Activated CD4-positive, alpha-beta T cell treated with anti-CD3 and anti-CD28 coated beads for 36 hours (primary cell): ENCODE measurements at regions of chr7 and their contacts with region 1.

Region 1: GRCh38 chr7:139416405-139416804 is 56.7 kb downstream of the LUC7L2 start:
- DNase-seq: no peak
- ATAC-seq: no peak
- H3K4me3 Mint-ChIP-seq: no peak overlapping the region
- H3K27ac Mint-ChIP-seq: no peak overlapping the region
- H3K4me1 Mint-ChIP-seq: no peaks in the 10 kb centered on the region
- H3K27me3 Mint-ChIP-seq: no peaks in the 10 kb centered on the region

Region 2: DNA sequence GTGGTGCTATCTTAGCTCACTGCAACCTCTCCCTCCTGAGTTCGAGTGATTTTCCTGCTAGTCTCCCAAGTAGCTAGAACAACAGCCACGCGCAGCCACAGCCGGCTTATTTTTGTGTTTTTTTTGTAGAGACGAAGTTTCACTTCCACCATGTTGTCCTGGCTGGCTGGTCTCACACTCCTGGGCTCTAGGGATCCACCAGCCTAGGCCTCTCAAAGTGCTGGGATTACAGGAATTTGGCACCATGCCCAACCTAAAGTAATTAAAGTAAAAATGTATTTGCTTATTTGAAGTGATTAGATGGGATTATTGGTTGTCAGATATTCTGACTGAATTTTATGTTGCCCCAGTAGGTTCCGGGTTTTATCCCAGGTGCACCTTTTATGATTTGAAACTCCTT is 34.0 kb before region 1 on chr7:
- CTCF ChIA-PET with region 1: interaction called, 3 read pairs
- POLR2A ChIA-PET with region 1: interaction called, 5 read pairs
- intact Hi-C with region 1: loop called in 1 of 2 experiments (anchors 5 kb)
- DNase-seq: no peak
- ATAC-seq: no peak
- H3K4me3 Mint-ChIP-seq: no peak overlapping the region
- H3K27ac Mint-ChIP-seq: no peak overlapping the region
- H3K4me1 Mint-ChIP-seq: peaks cover 3% of the 10 kb centered on the region
- H3K27me3 Mint-ChIP-seq: no peaks in the 10 kb centered on the region

Region 3: GRCh38 chr7:139393621-139394211 is 22.7 kb before region 1 on chr7:
- CTCF ChIA-PET with region 1: interaction called, 10 read pairs
- POLR2A ChIA-PET with region 1: interaction called, 3 read pairs
- intact Hi-C with region 1: no loop called
- DNase-seq: no peak
- ATAC-seq: peak; percentile 65
- H3K4me3 Mint-ChIP-seq: no peak overlapping the region
- H3K27ac Mint-ChIP-seq: no peak overlapping the region
- H3K4me1 Mint-ChIP-seq: peaks cover 46% of the 10 kb centered on the region
- H3K27me3 Mint-ChIP-seq: no peaks in the 10 kb centered on the region

Region 4: GRCh38 chr7:139403601-139404000 is 12.8 kb before region 1 on chr7:
- CTCF ChIA-PET with region 1: no interaction called
- POLR2A ChIA-PET with region 1: no interaction called
- intact Hi-C with region 1: loop called (anchors 1 kb)
- DNase-seq: no peak
- ATAC-seq: no peak
- H3K4me3 Mint-ChIP-seq: no peak overlapping the region
- H3K27ac Mint-ChIP-seq: no peak overlapping the region
- H3K4me1 Mint-ChIP-seq: no peaks in the 10 kb centered on the region
- H3K27me3 Mint-ChIP-seq: no peaks in the 10 kb centered on the region

Region 5: GRCh38 chr7:139855498-139856270 is 439.3 kb after region 1 on chr7:
- CTCF ChIA-PET with region 1: no interaction called
- POLR2A ChIA-PET with region 1: no interaction called
- intact Hi-C with region 1: no loop called
- DNase-seq: peak; percentile 41
- ATAC-seq: peak; percentile 82
- H3K4me3 Mint-ChIP-seq: no peak overlapping the region
- H3K27ac Mint-ChIP-seq: peak overlapping the region; percentile 69
- H3K4me1 Mint-ChIP-seq: peaks cover 33% of the 10 kb centered on the region
- H3K27me3 Mint-ChIP-seq: no peaks in the 10 kb centered on the region

Region 6: GRCh38 chr7:139915864-139916716 is 499.7 kb after region 1 on chr7:
- CTCF ChIA-PET with region 1: no interaction called
- POLR2A ChIA-PET with region 1: no interaction called
- intact Hi-C with region 1: no loop called
- DNase-seq: peak; percentile 83
- ATAC-seq: peak; percentile 95
- H3K4me3 Mint-ChIP-seq: peak overlapping the region; percentile 35
- H3K27ac Mint-ChIP-seq: peak overlapping the region; percentile 52
- H3K4me1 Mint-ChIP-seq: peaks cover 25% of the 10 kb centered on the region
- H3K27me3 Mint-ChIP-seq: peaks cover 3% of the 10 kb centered on the region